ENCODE measurements at regions of chr11 and their contacts with region 1.

Region 1: DNA sequence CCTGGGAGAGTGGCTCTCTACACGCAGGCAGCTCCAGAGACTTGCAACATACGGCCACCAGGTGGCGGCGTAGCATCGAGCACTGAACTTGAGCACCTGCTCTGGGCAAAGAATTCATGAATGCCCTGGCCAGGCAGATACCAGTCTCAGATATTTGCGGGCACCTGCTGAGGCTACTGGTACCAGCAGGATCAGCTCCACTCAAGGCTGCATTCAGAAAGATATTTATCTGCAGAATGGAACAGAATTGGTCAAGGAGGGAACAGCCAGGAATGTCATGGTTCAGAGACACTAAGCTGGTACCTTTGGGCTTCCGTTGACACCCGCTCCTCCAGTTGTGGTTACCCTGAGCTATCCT is 10.8 kb upstream of the CCDC86 start:
- DNase-seq: peak; percentile 95
- ATAC-seq: peak; percentile 73
- H3K4me3 ChIP-seq: peak overlapping the region; percentile 43
- H3K27ac ChIP-seq: peak overlapping the region; percentile 80
- H3K4me1 ChIP-seq: peaks cover 38% of the 10 kb centered on the region
- H3K27me3 ChIP-seq: no peaks in the 10 kb centered on the region
- CTCF ChIP-seq: peak; percentile 100

Region 2: DNA sequence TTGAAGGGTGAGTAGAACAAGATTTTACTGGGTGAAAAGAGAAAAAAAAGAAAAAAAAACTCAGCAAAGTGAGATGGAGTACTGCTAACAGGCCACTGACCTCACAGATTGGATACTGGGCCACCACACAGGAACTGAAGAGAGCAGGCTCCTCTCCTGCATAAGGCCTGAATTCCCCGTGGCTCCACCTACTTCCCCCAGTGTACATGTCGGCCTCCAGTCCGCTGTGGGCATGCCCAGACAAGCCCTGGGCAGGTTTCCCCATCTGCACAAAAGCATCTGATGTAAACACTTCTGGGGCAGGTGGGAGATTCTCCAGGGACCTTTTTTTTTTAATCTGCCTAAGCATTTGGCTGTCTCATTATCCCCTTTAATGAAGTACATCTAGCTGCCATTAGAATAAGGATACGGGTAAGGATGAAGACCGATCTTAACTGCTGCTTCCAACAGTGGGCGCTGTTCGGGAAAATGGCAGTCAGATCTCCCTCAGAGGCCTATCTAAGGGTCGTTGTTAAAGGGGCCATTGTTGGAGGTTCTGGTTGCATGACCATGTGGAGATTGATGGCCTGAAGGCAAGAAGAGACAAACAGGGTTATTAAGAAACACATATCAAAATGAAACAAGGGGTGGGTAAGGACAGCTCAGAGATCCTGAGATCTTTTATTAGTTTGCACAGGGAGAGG is 267.4 kb before region 1 on chr11:
- CTCF ChIA-PET with region 1: no interaction called
- POLR2A ChIA-PET with region 1: no interaction called
- intact Hi-C with region 1: no loop called
- DNase-seq: no peak
- ATAC-seq: no peak
- H3K4me3 ChIP-seq: no peak overlapping the region
- H3K27ac ChIP-seq: no peak overlapping the region
- H3K4me1 ChIP-seq: no peaks in the 10 kb centered on the region
- H3K27me3 ChIP-seq: peaks cover 5% of the 10 kb centered on the region; the same call in 1 of the 2 replicates
- CTCF ChIP-seq: 0 out of 2 replicates have a peak, but pooled peaks have one; percentile 23

Region 3: GRCh38 chr11:60775420-60775961 is 55.6 kb before region 1 on chr11:
- CTCF ChIA-PET with region 1: interaction called, 6 read pairs
- POLR2A ChIA-PET with region 1: no interaction called
- intact Hi-C with region 1: loop called (anchors 1 kb)
- DNase-seq: peak; percentile 97
- ATAC-seq: peak; percentile 87
- H3K4me3 ChIP-seq: no peak overlapping the region
- H3K27ac ChIP-seq: no peak overlapping the region
- H3K4me1 ChIP-seq: peaks cover 11% of the 10 kb centered on the region
- H3K27me3 ChIP-seq: no peaks in the 10 kb centered on the region
- CTCF ChIP-seq: peak; percentile 93

Region 4: GRCh38 chr11:60810569-60810968 is 20.6 kb before region 1 on chr11:
- CTCF ChIA-PET with region 1: no interaction called
- POLR2A ChIA-PET with region 1: no interaction called
- intact Hi-C with region 1: no loop called
- DNase-seq: no peak
- ATAC-seq: no peak
- H3K4me3 ChIP-seq: no peak overlapping the region
- H3K27ac ChIP-seq: no peak overlapping the region
- H3K4me1 ChIP-seq: no peaks in the 10 kb centered on the region
- H3K27me3 ChIP-seq: peaks cover 1% of the 10 kb centered on the region; the same call in 1 of the 2 replicates
- CTCF ChIP-seq: no peak

Region 5: DNA sequence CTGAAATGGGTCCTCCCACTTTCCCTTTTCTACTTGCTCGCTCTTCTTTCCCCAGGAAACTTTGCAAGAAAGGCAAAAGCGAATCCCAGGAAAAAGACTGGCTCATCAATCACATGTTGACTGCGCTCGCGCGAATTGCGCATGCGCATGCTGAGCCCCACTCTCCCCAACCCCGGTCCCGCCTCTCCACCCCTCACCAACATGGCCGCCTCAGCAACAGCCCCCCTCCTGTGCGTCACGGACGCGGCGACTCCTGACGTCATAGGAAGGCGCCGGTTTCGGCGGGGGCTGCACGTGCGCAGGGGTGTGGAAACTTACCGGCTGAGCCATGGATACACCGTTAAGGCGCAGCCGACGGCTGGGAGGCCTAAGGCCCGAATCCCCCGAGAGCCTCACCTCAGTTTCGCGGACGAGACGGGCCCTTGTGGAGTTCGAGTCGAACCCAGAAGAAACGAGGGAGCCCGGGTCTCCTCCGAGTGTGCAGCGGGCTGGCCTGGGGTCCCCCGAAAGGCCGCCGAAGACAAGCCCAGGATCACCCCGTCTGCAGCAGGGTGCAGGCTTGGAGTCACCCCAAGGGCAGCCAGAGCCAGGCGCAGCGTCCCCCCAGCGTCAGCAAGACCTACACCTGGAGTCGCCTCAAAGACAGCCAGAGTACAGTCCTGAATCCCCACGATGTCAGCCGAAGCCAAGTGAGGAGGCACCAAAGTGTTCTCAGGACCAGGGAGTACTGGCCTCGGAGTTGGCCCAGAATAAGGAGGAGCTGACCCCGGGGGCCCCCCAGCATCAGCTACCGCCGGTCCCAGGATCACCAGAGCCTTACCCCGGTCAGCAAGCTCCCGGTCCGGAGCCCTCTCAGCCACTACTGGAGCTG is 10.9 kb after region 1 on chr11 and contains the start of gene CCDC86:
- CTCF ChIA-PET with region 1: interaction called, 6 read pairs
- POLR2A ChIA-PET with region 1: no interaction called
- intact Hi-C with region 1: loop called (anchors 1 kb)
- DNase-seq: peak; percentile 98
- ATAC-seq: peak; percentile 73
- H3K4me3 ChIP-seq: peak within 1 kb of the TSS; percentile 92
- H3K27ac ChIP-seq: peak within 1 kb of the TSS; percentile 59
- H3K4me1 ChIP-seq: peaks cover 31% of the 10 kb centered on the region
- H3K27me3 ChIP-seq: no peaks in the 10 kb centered on the region
- CTCF ChIP-seq: no peak
- total RNA-seq, gene CCDC86: 67.9 and 108 TPM in 2 replicates

Region 6: DNA sequence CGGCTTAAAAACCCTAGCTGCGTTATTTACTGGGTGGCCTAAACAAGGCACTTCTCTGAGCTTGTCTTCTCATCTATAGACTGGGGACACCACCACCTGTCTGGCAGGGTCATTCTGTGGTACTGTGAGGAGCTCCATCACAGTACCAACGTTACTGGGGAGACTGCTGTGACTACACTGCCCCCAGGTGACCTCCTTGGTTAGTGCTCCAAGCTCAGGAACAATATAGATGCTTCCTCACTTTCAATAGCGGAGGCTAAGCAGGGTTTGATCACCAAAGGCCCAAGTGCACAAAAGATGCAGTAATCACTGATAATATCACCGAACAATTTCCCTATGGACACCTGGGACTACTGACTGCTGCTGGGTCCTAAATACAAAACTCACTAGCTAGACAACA is 56.4 kb after region 1 on chr11:
- CTCF ChIA-PET with region 1: interaction called, 123 read pairs
- POLR2A ChIA-PET with region 1: interaction called, 5 read pairs
- intact Hi-C with region 1: loop called (anchors 1 kb)
- DNase-seq: peak; percentile 79
- ATAC-seq: peak; percentile 98
- H3K4me3 ChIP-seq: no peak overlapping the region
- H3K27ac ChIP-seq: no peak overlapping the region
- H3K4me1 ChIP-seq: no peaks in the 10 kb centered on the region
- H3K27me3 ChIP-seq: no peaks in the 10 kb centered on the region
- CTCF ChIP-seq: peak; percentile 93

Region 7: DNA sequence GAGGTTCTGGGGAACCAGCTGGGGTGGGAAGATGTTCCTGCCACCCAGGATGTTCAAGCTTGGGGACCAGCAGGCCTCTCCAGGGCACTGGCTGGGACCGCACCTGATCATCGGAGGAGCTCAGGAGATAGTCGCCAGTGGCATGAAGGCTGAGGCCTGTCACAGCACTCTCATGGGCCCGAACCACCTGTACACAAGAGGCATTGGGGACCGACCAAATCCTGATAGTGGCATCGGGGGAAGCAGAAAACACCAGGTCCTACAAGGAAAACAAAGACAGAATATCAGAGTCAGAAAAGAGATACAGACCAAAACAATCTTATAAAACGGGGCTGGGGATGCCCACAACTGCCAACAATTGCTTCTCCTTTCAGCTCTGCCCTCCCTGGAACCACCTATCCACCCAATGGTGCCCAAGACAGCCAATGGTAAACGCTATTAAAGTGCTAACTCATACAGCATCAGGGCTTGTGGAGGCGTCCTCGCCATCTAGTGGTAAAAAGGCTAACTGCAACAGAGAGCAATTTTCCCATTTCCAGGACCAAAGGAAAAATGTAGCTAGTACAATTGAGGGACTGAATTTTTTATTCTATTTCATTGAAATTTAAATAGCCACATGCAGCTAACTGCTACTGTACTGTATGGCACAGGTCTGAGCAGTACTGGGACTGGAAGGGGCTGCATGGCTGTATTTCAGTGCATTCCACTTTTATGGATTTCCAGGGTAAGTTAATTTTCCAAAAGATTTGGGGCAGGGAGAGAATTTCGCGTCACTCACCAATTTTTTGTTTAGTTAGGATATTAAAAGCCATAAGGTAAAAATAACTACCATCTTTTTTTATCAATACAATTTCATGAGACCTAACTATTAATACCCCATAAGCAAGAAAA is 68.2 kb after region 1 on chr11:
- CTCF ChIA-PET with region 1: interaction called, 29 read pairs
- POLR2A ChIA-PET with region 1: no interaction called
- intact Hi-C with region 1: loop called (anchors 1 kb)
- DNase-seq: peak; percentile 89
- ATAC-seq: peak; percentile 96
- H3K4me3 ChIP-seq: no peak overlapping the region
- H3K27ac ChIP-seq: no peak overlapping the region
- H3K4me1 ChIP-seq: peaks cover 5% of the 10 kb centered on the region
- H3K27me3 ChIP-seq: no peaks in the 10 kb centered on the region
- CTCF ChIP-seq: peak; percentile 97

Region 8: GRCh38 chr11:61071208-61071681 is 240.1 kb after region 1 on chr11:
- CTCF ChIA-PET with region 1: no interaction called
- POLR2A ChIA-PET with region 1: no interaction called
- intact Hi-C with region 1: no loop called
- DNase-seq: no peak
- ATAC-seq: no peak
- H3K4me3 ChIP-seq: no peak overlapping the region
- H3K27ac ChIP-seq: no peak overlapping the region
- H3K4me1 ChIP-seq: no peaks in the 10 kb centered on the region
- H3K27me3 ChIP-seq: peaks cover 9% of the 10 kb centered on the region
- CTCF ChIP-seq: no peak

Region 9: DNA sequence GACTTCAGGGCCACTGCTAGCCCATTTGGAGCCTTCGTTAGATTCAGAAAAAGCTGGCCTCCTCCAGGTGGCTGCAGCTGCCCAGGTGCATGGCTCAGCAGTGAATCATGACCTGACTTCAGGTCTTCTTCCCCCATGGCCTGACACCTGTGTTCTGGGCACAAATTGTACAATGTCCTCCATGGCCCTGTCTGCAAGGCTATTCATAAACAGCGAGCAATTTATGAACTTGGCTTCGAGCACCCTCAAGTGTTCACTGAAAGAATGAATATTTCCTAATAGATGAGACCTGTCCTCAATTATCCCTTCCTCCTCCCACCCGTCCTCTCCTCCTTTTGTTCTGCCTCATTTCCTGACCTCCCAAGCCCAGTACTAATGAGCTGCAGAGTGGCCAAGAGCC is 342.3 kb after region 1 on chr11:
- CTCF ChIA-PET with region 1: no interaction called
- POLR2A ChIA-PET with region 1: no interaction called
- intact Hi-C with region 1: loop called (anchors 1 kb)
- DNase-seq: peak; percentile 84
- ATAC-seq: peak; percentile 93
- H3K4me3 ChIP-seq: no peak overlapping the region
- H3K27ac ChIP-seq: no peak overlapping the region
- H3K4me1 ChIP-seq: peaks cover 6% of the 10 kb centered on the region; the same call in 1 of the 2 replicates
- H3K27me3 ChIP-seq: peaks cover 30% of the 10 kb centered on the region
- CTCF ChIP-seq: peak; percentile 72

Region 10: GRCh38 chr11:61187505-61188130 is 356.5 kb after region 1 on chr11:
- CTCF ChIA-PET with region 1: no interaction called
- POLR2A ChIA-PET with region 1: no interaction called
- intact Hi-C with region 1: loop called (anchors 2 kb)
- DNase-seq: peak; percentile 91
- ATAC-seq: peak; percentile 87
- H3K4me3 ChIP-seq: no peak overlapping the region
- H3K27ac ChIP-seq: no peak overlapping the region
- H3K4me1 ChIP-seq: no peaks in the 10 kb centered on the region
- H3K27me3 ChIP-seq: no peaks in the 10 kb centered on the region
- CTCF ChIP-seq: peak; percentile 94

Measured in PC-3 (cell line).